ENCODE measurements at regions of chr9 and their contacts with region 1.

Region 1: DNA sequence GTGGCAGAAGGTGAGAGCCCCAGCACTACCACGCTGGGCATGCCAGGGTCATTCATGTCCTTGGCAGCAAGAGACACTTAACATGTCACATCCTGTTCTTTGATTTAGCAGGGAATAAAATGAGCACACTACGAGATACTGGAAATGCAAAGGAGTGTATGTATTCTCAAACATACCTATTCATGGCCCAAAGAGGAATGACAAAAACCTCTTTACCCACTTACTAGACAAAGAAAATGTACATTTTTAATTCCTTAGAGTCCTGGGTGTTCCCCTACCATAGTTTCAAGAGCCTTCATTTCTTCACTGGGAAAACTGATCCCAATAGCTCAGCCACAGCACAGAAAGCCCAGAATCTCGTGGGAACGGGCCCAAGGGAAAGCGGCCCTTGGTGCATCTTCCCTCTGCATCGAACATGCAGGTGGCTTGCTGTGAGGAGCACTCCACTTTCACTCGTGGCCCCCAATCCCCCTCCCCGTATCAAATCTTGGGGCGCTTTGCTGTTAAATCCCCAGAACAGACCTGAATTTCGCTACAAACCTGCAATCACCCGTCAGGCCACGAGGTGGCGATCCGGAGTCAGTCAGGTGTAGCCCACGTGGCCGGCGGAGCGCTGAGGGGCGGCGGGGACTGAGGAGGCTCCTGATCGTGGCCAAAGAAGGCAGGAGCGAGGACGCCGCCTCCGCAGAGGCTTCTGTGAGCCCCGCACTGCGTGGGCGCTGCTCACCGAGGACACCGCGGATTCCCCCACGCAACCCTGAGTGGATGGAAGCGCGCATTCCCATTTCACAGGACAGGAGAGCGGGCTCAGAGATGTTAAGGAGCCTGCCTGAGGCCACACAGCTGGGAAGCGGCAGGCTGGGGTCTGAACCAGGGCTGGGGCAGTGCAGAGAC is 91.4 kb downstream of the LMX1B start:
- DNase-seq: peak; percentile 74 to 85 (median 82)
- ATAC-seq: peak; percentile 80
- H3K4me3 ChIP-seq: no peak overlapping the region
- H3K4me1 ChIP-seq: no peaks in the 10 kb centered on the region
- CTCF ChIP-seq: peak; percentile 85

Region 2: GRCh38 chr9:126500684-126501382 is 204.3 kb before region 1 on chr9:
- intact Hi-C with region 1: no loop called
- DNase-seq: peak; percentile 65 to 74 (median 72)
- ATAC-seq: peak; percentile 73
- H3K4me3 ChIP-seq: no peak overlapping the region
- H3K4me1 ChIP-seq: no peaks in the 10 kb centered on the region
- CTCF ChIP-seq: peak; percentile 96

Region 3: DNA sequence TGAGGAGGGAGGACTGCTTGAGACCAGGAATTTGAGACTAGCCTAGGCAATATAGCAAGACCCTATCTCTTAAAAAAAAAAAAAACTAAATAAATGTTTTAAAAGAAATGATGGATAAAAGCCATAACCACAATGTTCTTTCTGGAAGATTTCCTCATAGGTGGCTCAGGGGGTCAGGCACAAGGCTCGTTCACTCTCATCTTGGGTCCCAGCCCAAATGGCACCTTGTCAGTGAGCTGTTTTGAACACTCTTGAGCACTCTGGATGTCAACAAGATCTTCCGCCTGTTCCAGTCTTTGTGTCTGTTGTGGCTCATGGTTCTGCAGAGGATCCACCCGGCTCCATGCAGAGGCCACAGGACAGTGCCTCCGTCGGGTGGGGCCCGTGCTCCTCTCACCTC is 127.1 kb before region 1 on chr9:
- intact Hi-C with region 1: no loop called
- DNase-seq: no peak
- ATAC-seq: no peak
- H3K4me3 ChIP-seq: no peak overlapping the region
- H3K4me1 ChIP-seq: no peaks in the 10 kb centered on the region
- CTCF ChIP-seq: no peak

Region 4: GRCh38 chr9:126611592-126612325 is 93.4 kb before region 1 on chr9:
- intact Hi-C with region 1: no loop called
- DNase-seq: peak in 2 of 3 donors; percentile 80 to 84
- ATAC-seq: peak; percentile 89
- H3K4me3 ChIP-seq: no peak overlapping the region
- H3K4me1 ChIP-seq: peaks cover 25% of the 10 kb centered on the region
- CTCF ChIP-seq: peak; percentile 86

Region 5: GRCh38 chr9:126781186-126782052 is 76.3 kb after region 1 on chr9:
- intact Hi-C with region 1: loop called (anchors 2 to 5 kb)
- DNase-seq: peak; percentile 75 to 85 (median 85)
- ATAC-seq: peak; percentile 92
- H3K4me3 ChIP-seq: no peak overlapping the region
- H3K4me1 ChIP-seq: no peaks in the 10 kb centered on the region
- CTCF ChIP-seq: peak; percentile 90

Measured in mucosa of descending colon (tissue), 3 donors.